ENCODE measurements at regions of chr3 and their contacts with region 1.

Region 1: GRCh38 chr3:33668618-33669017 is 49.4 kb downstream of the CLASP2 start:
- DNase-seq: no peak
- H3K4me3 ChIP-seq: no peak overlapping the region
- CTCF ChIP-seq: no peak
- POLR2A ChIP-seq: no peak

Region 2: GRCh38 chr3:33433843-33434242 is 234.8 kb before region 1 on chr3:
- intact Hi-C with region 1: no loop called
- DNase-seq: no peak
- H3K4me3 ChIP-seq: no peak overlapping the region
- CTCF ChIP-seq: no peak
- POLR2A ChIP-seq: no peak

Region 3: GRCh38 chr3:33711100-33711499 is 42.5 kb after region 1 on chr3:
- intact Hi-C with region 1: loop called (anchors 1 kb)
- DNase-seq: no peak
- H3K4me3 ChIP-seq: no peak overlapping the region
- CTCF ChIP-seq: no peak
- POLR2A ChIP-seq: no peak

Measured in lower leg skin (tissue), 4 donors.